Esophagus squamous epithelium (tissue), 5 donors: ENCODE measurements at regions of chr11 and their contacts with region 1.

Region 1: GRCh38 chr11:65274735-65275682 is 13.2 kb downstream of the POLA2 start:
- DNase-seq: no peak
- H3K4me3 ChIP-seq: no peak overlapping the region
- H3K27ac ChIP-seq: peak overlapping the region in 2 of 4 donors; percentile 11 to 52
- H3K4me1 ChIP-seq: peaks cover 0 to 23% (median 8%) of the 10 kb centered on the region in 3 donors
- H3K27me3 ChIP-seq: no peaks in the 10 kb centered on the region
- CTCF ChIP-seq: peak in 5 of 6 experiments; percentile 65 to 91 (median 88)
- POLR2A ChIP-seq: no peak

Region 2: DNA sequence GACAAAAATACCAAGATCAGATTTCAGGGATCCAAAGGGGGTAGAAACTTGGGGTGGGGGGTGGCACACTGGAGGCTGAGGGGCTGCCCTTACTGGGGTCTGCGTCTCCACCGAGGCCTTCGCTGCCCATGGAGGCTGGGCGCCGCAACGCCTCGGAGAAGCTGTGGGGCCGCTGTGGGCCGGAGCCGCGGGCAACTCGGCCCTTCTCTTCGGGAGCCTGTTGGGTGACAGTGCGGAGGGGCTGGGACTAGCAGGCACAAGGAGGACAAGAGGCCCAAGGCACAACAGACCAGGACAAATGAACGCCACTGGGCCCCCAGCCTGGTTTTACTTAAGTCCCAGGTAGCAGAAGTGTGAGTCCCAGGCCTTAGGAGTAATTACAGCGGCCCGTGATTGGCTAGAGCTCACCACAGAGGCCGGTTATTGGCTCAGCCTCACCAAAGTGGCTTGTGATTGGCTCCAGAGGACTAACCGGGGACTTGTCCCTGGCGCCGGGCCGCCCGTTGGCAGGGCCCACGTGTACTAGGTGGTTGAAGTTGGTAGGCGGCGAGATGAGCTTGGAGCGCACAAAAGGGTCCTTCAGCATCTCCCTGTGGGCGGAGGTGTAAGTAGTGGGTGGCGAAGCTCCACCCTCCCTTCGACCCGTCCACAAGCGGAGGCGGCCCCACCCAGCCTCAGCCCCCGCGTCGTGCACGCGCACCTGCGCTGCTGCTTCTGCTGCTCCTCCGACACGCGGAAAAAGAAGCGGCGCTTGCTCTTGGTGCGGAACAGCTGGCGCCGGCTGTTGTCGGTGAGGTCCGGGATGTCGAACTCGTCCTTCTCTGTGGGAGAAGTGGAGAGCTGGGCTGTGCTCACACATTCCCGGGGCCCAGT is 448.2 kb before region 1 on chr11:
- intact Hi-C with region 1: no loop called
- DNase-seq: no peak
- H3K4me3 ChIP-seq: no peak overlapping the region
- H3K27ac ChIP-seq: no peak overlapping the region
- H3K4me1 ChIP-seq: no peaks in the 10 kb centered on the region
- H3K27me3 ChIP-seq: no peaks in the 10 kb centered on the region
- CTCF ChIP-seq: no peak
- POLR2A ChIP-seq: no peak

Region 3: GRCh38 chr11:65314501-65315203 is 39.6 kb after region 1 on chr11 and contains the start of gene CDC42EP2:
- intact Hi-C with region 1: loop called (anchors 5 kb)
- DNase-seq: no peak
- H3K4me3 ChIP-seq: peak within 1 kb of the TSS; percentile 47 to 81 (median 77)
- H3K27ac ChIP-seq: peak within 1 kb of the TSS; percentile 77 to 96 (median 88)
- H3K4me1 ChIP-seq: peaks cover 18 to 88% (median 28%) of the 10 kb centered on the region in 3 donors
- H3K27me3 ChIP-seq: peaks cover 0 to 8% (median 0%) of the 10 kb centered on the region in 4 donors
- CTCF ChIP-seq: peak in 2 of 6 experiments; percentile 9 to 24
- POLR2A ChIP-seq: peak in 2 of 4 donors; percentile 75 to 78
- total RNA-seq, gene CDC42EP2: 0.76 to 11.4 (median 5.6) TPM

Region 4: GRCh38 chr11:65329944-65330403 is 55.0 kb after region 1 on chr11:
- intact Hi-C with region 1: loop called (anchors 2 kb)
- DNase-seq: no peak
- H3K4me3 ChIP-seq: no peak overlapping the region
- H3K27ac ChIP-seq: peak overlapping the region in 2 of 4 donors; percentile 2 to 51
- H3K4me1 ChIP-seq: peaks cover 7 to 27% (median 8%) of the 10 kb centered on the region in 3 donors
- H3K27me3 ChIP-seq: no peaks in the 10 kb centered on the region
- CTCF ChIP-seq: peak; percentile 78 to 87 (median 80)
- POLR2A ChIP-seq: no peak